ENCODE measurements at regions of chr18 and their contacts with region 1.

Region 1: DNA sequence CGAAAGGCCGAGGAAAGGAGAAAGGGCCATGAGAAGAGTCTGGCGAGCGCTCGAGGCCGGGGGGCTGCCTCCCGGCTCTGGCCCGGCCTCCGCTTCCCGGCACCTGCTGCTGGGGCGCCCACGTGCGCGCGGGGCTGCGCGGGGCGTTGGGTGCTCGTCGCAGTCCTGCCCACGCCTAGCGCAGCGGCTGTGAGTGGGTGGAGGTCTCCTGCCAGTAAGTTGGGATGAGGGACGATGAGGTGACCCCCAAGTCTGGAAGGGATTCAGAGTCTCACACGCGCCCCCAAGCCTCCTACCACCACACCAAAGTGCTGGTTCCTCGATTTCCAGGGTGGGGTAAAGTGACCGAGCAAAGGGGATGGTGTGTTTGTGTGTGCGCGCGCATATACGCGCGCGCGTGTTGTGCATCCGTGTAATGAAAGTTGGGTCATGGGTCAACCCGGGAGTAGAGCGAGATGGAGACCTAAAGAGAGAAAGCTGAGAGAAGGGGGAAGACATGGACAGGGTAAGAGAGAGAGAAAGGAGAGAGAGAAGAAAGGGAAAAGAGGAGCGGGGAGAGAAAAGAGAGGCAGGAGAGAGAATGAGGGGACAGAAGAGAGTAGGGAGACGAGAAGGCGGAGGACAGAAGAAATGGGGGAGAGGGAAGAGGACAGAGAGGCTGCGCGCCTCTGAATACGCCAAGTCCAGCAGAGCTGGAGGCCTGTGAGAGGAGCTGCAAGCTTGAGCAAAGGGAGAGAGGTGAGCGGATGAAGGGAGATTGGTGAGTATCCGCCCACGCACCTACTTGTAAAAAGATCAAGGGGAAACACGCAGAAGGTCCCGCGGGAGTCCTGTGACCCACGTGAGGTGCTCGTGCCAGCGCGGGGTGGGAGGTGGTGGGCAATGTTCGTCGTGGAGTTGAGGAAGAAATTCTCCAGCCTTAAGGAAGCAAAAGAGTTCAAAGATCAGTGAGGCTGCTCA is 1.7 kb upstream of the NETO1 start:
- DNase-seq: no peak
- H3K4me3 ChIP-seq: no peak overlapping the region
- H3K27ac ChIP-seq: no peak overlapping the region
- H3K4me1 ChIP-seq: peaks cover 17% of the 10 kb centered on the region
- H3K27me3 ChIP-seq: no peaks in the 10 kb centered on the region
- CTCF ChIP-seq: no peak

Region 2: DNA sequence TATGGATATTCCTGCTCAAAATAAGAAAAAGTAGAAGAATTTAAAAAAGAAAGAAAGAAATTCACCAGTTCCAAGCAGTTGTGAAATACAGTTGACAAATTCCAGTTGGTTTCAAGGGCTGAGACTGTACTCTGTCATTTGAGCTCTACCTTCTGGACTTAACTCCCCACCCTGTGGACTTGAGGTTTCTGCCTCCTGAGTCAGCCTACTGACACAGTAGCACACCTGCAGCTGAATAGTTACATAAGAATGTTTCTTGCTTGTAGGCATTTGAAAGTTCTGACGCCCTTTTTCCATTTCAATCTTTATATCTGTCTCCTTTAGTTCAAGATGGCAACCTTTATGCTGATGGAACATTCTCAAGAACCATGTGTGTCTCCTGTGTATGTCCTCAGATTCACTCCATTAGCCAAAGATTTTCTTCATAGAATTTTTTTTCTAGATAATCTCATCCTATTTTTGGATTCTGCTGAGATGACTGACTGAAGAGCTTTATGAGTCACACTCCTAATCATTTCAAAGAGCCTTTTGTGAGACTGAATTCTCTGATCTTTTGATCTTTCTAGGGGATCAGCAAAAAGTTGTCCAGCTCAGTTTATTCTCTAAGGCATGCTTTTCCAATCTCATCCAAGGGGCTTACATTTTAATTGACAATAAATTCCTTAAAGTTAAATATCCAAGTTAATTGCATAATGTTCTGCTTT is 20.8 kb before region 1 on chr18:
- CTCF ChIA-PET with region 1: no interaction called
- POLR2A ChIA-PET with region 1: no interaction called
- intact Hi-C with region 1: loop called (anchors 2 kb)
- DNase-seq: peak; percentile 41 to 91
- H3K4me3 ChIP-seq: no peak overlapping the region
- H3K27ac ChIP-seq: peak overlapping the region; percentile 72
- H3K4me1 ChIP-seq: peaks cover 26% of the 10 kb centered on the region
- H3K27me3 ChIP-seq: no peaks in the 10 kb centered on the region
- CTCF ChIP-seq: no peak

Region 3: GRCh38 chr18:73093687-73094250 is 224.3 kb after region 1 on chr18:
- CTCF ChIA-PET with region 1: no interaction called
- POLR2A ChIA-PET with region 1: no interaction called
- intact Hi-C with region 1: no loop called
- DNase-seq: no peak
- H3K4me3 ChIP-seq: no peak overlapping the region
- H3K27ac ChIP-seq: no peak overlapping the region
- H3K4me1 ChIP-seq: no peaks in the 10 kb centered on the region
- H3K27me3 ChIP-seq: no peaks in the 10 kb centered on the region
- CTCF ChIP-seq: no peak